ENCODE measurements at regions of chr2 and their contacts with region 1.

Region 1: GRCh38 chr2:185811580-185811979 is 73.0 kb downstream of the FSIP2 start:
- DNase-seq: no peak
- H3K4me3 ChIP-seq: no peak overlapping the region
- H3K27ac ChIP-seq: no peak overlapping the region
- H3K4me1 ChIP-seq: no peaks in the 10 kb centered on the region
- H3K27me3 ChIP-seq: no peaks in the 10 kb centered on the region
- CTCF ChIP-seq: no peak

Region 2: DNA sequence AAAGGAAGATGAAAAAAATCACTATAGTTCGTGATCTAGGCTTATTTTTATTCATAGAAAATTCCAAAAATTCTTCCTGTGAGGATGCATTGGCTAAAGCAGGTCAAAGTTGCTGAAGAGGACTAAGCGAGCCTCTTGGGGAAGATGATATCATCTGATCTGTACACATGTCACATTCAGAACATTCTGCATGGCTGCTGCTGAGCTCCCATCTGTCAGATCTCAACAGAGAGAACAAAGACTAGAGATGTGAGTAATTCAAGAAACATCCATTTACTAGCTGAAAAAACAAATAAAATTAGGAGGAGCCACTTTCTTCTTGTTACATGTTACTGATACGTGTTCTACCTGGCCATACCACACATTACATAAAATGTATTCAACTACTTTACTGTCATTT is 591.6 kb before region 1 on chr2:
- CTCF ChIA-PET with region 1: no interaction called
- POLR2A ChIA-PET with region 1: no interaction called
- intact Hi-C with region 1: no loop called
- DNase-seq: no peak
- H3K4me3 ChIP-seq: no peak overlapping the region
- H3K27ac ChIP-seq: no peak overlapping the region
- H3K4me1 ChIP-seq: no peaks in the 10 kb centered on the region
- H3K27me3 ChIP-seq: no peaks in the 10 kb centered on the region
- CTCF ChIP-seq: no peak

Region 3: GRCh38 chr2:185835974-185836373 is 24.4 kb after region 1 on chr2:
- CTCF ChIA-PET with region 1: no interaction called
- POLR2A ChIA-PET with region 1: no interaction called
- intact Hi-C with region 1: no loop called
- DNase-seq: no peak
- H3K4me3 ChIP-seq: no peak overlapping the region
- H3K27ac ChIP-seq: no peak overlapping the region
- H3K4me1 ChIP-seq: no peaks in the 10 kb centered on the region
- H3K27me3 ChIP-seq: no peaks in the 10 kb centered on the region
- CTCF ChIP-seq: no peak

Region 4: DNA sequence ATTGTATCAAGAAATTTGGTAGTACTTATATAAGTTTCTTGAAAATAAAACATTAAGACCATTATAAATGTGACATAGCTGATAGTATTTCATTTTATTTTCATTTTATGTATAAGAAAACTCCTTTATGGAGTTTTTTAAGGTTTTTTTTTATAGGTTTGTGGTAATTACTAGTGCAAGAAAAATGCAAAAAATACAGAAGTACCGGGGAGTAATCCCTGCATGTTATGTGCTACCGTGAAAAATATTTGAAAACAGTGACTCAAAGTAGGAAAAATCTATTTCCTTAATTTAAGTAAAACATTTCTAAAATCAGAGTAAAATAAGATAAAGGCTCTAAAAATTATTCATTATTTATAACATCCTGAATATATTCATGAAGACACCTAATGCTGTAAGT is 1015.8 kb after region 1 on chr2:
- CTCF ChIA-PET with region 1: interaction called, 10 read pairs
- POLR2A ChIA-PET with region 1: no interaction called
- intact Hi-C with region 1: no loop called
- DNase-seq: no peak
- H3K4me3 ChIP-seq: no peak overlapping the region
- H3K27ac ChIP-seq: no peak overlapping the region
- H3K4me1 ChIP-seq: no peaks in the 10 kb centered on the region
- H3K27me3 ChIP-seq: no peaks in the 10 kb centered on the region
- CTCF ChIP-seq: no peak

Measured in PC-9 (cell line).